ENCODE measurements at regions of chr3 and their contacts with region 1.

Region 1: GRCh38 chr3:13895155-13896105 is 15.6 kb upstream of the WNT7A start:
- DNase-seq: peak; percentile 98
- H3K4me3 Mint-ChIP-seq: peak overlapping the region; percentile 79
- H3K27ac Mint-ChIP-seq: peak overlapping the region; percentile 61
- H3K4me1 Mint-ChIP-seq: peaks cover 23% of the 10 kb centered on the region
- H3K27me3 Mint-ChIP-seq: no peaks in the 10 kb centered on the region

Region 2: DNA sequence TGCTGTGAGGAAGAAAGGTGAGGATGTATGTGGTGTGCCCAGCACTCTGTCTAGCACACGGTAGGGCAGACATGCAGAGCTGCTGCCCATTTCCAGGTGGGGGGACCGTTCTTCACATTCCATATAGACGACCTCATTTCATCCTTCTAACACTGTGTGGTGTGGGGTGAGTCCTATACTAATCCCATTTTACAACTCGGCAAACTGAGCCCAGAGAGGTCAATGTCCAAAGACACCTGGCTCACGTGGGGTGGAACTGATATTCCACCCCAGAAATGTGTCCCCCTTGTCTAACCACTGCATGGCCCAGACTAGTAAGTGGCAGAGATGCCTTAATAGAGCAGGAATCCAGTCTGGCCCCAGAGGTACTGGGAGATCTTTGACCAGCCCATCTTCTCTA is 227.3 kb before region 1 on chr3:
- CTCF ChIA-PET with region 1: no interaction called
- intact Hi-C with region 1: no loop called
- DNase-seq: no peak
- H3K4me3 Mint-ChIP-seq: no peak overlapping the region
- H3K27ac Mint-ChIP-seq: no peak overlapping the region
- H3K4me1 Mint-ChIP-seq: no peaks in the 10 kb centered on the region
- H3K27me3 Mint-ChIP-seq: no peaks in the 10 kb centered on the region

Region 3: DNA sequence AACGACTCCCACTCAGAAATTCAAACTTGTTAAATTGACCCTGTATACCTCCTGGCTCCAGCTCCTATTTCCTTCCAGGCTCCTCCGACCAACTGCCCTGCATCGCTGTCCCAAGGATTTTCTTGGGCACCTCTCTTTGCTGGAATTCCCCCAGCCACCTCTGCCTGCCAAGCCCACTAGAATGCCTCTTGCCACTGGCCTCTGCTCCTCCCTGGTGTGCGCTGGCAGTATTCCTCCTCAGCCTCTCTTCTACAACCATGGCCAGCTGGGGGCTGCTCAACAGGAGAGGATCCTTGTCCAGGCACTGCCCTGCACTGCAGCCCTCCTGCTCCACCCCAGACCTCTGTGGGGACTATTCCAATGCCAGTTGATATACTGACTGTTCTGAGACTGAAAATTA is 23.0 kb before region 1 on chr3:
- CTCF ChIA-PET with region 1: no interaction called
- intact Hi-C with region 1: no loop called
- DNase-seq: no peak
- H3K4me3 Mint-ChIP-seq: no peak overlapping the region
- H3K27ac Mint-ChIP-seq: no peak overlapping the region
- H3K4me1 Mint-ChIP-seq: peaks cover 22% of the 10 kb centered on the region
- H3K27me3 Mint-ChIP-seq: peaks cover 1% of the 10 kb centered on the region

Region 4: GRCh38 chr3:13884851-13885703 is 10.4 kb before region 1 on chr3:
- CTCF ChIA-PET with region 1: interaction called, 23 read pairs
- intact Hi-C with region 1: no loop called
- DNase-seq: peak; percentile 84
- H3K4me3 Mint-ChIP-seq: no peak overlapping the region
- H3K27ac Mint-ChIP-seq: no peak overlapping the region
- H3K4me1 Mint-ChIP-seq: no peaks in the 10 kb centered on the region
- H3K27me3 Mint-ChIP-seq: peaks cover 7% of the 10 kb centered on the region

Region 5: GRCh38 chr3:14144423-14145075 is 249.1 kb after region 1 on chr3:
- CTCF ChIA-PET with region 1: interaction called, 7 read pairs
- intact Hi-C with region 1: loop called (anchors 2 kb)
- DNase-seq: peak; percentile 70
- H3K4me3 Mint-ChIP-seq: peak overlapping the region; percentile 19
- H3K27ac Mint-ChIP-seq: peak overlapping the region; percentile 81
- H3K4me1 Mint-ChIP-seq: peaks cover 48% of the 10 kb centered on the region
- H3K27me3 Mint-ChIP-seq: no peaks in the 10 kb centered on the region

Region 6: GRCh38 chr3:14261229-14261628 is 365.8 kb after region 1 on chr3:
- CTCF ChIA-PET with region 1: interaction called, 4 read pairs
- intact Hi-C with region 1: loop called (anchors 1 kb)
- DNase-seq: peak; percentile 86
- H3K4me3 Mint-ChIP-seq: no peak overlapping the region
- H3K27ac Mint-ChIP-seq: no peak overlapping the region
- H3K4me1 Mint-ChIP-seq: no peaks in the 10 kb centered on the region
- H3K27me3 Mint-ChIP-seq: no peaks in the 10 kb centered on the region

Region 7: DNA sequence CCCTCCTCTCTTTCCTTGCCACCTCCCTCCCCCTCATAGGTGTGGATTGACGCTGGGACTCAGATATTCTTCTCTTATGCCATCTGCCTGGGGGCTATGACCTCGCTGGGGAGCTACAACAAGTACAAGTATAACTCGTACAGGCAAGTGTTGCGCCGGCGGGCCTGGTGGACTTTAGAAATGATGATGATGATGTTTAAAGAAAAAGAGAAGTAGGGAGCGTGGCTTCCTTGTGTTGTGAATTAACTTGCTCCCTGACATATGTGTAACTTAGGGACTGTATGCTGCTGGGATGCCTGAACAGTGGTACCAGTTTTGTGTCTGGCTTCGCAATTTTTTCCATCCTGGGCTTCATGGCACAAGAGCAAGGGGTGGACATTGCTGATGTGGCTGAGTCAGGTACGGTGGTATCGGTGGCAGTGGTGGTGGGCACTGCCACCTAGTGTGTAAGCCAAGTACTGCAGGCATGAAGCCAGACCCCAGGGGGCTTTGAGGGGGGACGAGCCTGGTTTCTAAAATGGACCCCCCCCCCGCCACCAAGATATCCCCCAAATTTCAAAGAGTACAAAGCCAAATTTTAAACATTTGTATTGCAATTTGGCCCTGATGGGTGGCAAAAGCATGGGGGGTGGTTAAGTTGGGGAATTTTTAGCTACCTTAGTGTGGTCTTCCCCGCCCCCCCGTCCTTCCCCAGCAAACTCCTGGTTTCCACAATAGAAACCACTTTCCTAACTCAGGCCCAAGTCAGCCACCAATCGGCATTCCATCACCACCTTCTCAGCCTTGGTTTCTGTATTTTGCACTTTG is 572.6 kb after region 1 on chr3:
- CTCF ChIA-PET with region 1: no interaction called
- intact Hi-C with region 1: loop called (anchors 1 kb)
- DNase-seq: peak; percentile 47
- H3K4me3 Mint-ChIP-seq: no peak overlapping the region
- H3K27ac Mint-ChIP-seq: peak overlapping the region; percentile 30
- H3K4me1 Mint-ChIP-seq: peaks cover under 1% of the 10 kb centered on the region
- H3K27me3 Mint-ChIP-seq: no peaks in the 10 kb centered on the region

Measured in activated naive CD4-positive, alpha-beta T cell treated with anti-CD3 and anti-CD28 coated beads for 36 hours (primary cell).